ENCODE measurements at regions of chr4 and their contacts with region 1.

Region 1: GRCh38 chr4:173990126-173990868 is 293.2 kb downstream of the FBXO8 start:
- DNase-seq: peak in 1 of 2 donors; percentile 11
- ATAC-seq: peak; percentile 56 to 92 (median 76)
- H3K4me3 ChIP-seq: peak overlapping the region in 8 of 10 donors; percentile 3 to 27 (median 12)
- H3K27ac ChIP-seq: peak overlapping the region; percentile 4 to 73 (median 54)
- H3K4me1 ChIP-seq: peaks cover 0 to 20% (median 3%) of the 10 kb centered on the region in 9 donors
- H3K27me3 ChIP-seq: no peaks in the 10 kb centered on the region
- CTCF ChIP-seq: peak in 8 of 9 donors; percentile 32 to 69 (median 56)

Region 2: GRCh38 chr4:173436149-173436579 is 554.1 kb before region 1 on chr4:
- intact Hi-C with region 1: loop called in 1 of 10 experiments (anchors 10 kb)
- DNase-seq: no peak
- ATAC-seq: peak in 2 of 8 donors; percentile 9 to 29
- H3K4me3 ChIP-seq: no peak overlapping the region
- H3K27ac ChIP-seq: peak overlapping the region in 1 of 10 donors; percentile 14
- H3K4me1 ChIP-seq: peaks cover 0 to 12% (median 0%) of the 10 kb centered on the region in 9 donors
- H3K27me3 ChIP-seq: no peaks in the 10 kb centered on the region
- CTCF ChIP-seq: no peak

Region 3: GRCh38 chr4:173766171-173766600 is 224.1 kb before region 1 on chr4:
- intact Hi-C with region 1: loop called in 1 of 10 experiments (anchors 10 kb)
- DNase-seq: no peak
- ATAC-seq: peak in 4 of 8 donors; percentile 14 to 36 (median 28)
- H3K4me3 ChIP-seq: no peak overlapping the region
- H3K27ac ChIP-seq: no peak overlapping the region
- H3K4me1 ChIP-seq: peaks cover 0 to 11% (median 0%) of the 10 kb centered on the region in 9 donors
- H3K27me3 ChIP-seq: no peaks in the 10 kb centered on the region
- CTCF ChIP-seq: no peak

Region 4: GRCh38 chr4:173807347-173807746 is 182.9 kb before region 1 on chr4:
- intact Hi-C with region 1: no loop called
- DNase-seq: peak in 1 of 2 donors; percentile 7
- ATAC-seq: peak in 4 of 8 donors; percentile 43 to 87 (median 80)
- H3K4me3 ChIP-seq: no peak overlapping the region
- H3K27ac ChIP-seq: no peak overlapping the region
- H3K4me1 ChIP-seq: no peaks in the 10 kb centered on the region
- H3K27me3 ChIP-seq: no peaks in the 10 kb centered on the region
- CTCF ChIP-seq: no peak

Region 5: GRCh38 chr4:174135936-174136406 is 145.7 kb after region 1 on chr4:
- intact Hi-C with region 1: no loop called
- DNase-seq: no peak
- ATAC-seq: no peak
- H3K4me3 ChIP-seq: peak overlapping the region in 8 of 10 donors; percentile 8 to 47 (median 43)
- H3K27ac ChIP-seq: peak overlapping the region in 1 of 10 donors; percentile 31
- H3K4me1 ChIP-seq: no peaks in the 10 kb centered on the region
- H3K27me3 ChIP-seq: no peaks in the 10 kb centered on the region
- CTCF ChIP-seq: no peak

Region 6: DNA sequence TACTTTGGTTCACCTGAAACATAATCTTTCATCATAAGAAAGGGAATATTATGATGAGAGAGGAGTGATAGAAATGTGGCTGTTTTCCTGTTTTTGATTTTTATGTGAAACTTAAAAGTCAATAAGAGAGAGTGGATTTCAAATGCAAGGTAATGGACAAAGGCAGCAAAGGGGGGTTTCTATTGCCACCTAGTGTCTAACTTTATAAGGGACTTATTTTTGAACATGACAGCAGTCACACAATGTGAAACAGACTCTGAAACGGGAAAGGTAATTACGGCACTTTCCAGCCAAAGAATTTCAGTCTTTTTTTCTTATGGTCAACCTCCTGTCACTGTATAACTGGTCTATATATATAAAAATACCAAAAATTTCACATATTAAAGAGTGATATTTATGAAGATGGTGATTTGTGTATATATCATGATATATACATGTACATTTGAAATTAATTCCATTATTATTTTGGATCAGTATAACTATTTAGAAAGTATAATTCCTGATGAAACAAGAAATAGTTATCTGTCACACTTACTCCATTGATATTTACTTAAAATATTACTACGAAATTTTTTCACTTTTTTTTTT is 166.0 kb after region 1 on chr4:
- intact Hi-C with region 1: loop called in 2 of 10 experiments (anchors 5 to 10 kb)
- DNase-seq: peak in 1 of 2 donors; percentile 12
- ATAC-seq: peak; percentile 73 to 85 (median 82)
- H3K4me3 ChIP-seq: peak overlapping the region in 2 of 10 donors; percentile 14
- H3K27ac ChIP-seq: peak overlapping the region in 2 of 10 donors; percentile 28 to 37
- H3K4me1 ChIP-seq: peaks cover 0 to 18% (median 7%) of the 10 kb centered on the region in 9 donors
- H3K27me3 ChIP-seq: no peaks in the 10 kb centered on the region
- CTCF ChIP-seq: peak; percentile 37 to 77 (median 67)

Region 7: DNA sequence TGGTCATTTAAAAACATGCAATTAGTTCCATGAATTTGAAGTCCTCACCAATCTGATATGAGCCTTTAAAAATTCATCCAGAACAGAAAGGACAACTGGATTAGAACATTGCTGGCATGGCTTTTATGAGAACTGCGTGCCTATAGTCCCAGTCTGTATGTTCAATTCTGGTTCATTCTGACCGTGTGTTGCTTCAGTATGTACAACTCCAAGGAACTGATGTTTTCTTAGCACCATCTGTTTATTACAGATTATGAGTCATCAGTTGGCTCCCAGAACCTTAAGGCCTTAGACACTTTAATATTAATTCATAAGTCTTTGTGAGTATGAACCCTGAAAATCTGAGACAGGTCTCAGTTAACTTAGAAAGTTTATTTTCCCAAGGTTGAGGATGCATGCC is 408.4 kb after region 1 on chr4:
- intact Hi-C with region 1: no loop called
- DNase-seq: no peak
- ATAC-seq: peak in 2 of 8 donors; percentile 63 to 67
- H3K4me3 ChIP-seq: no peak overlapping the region
- H3K27ac ChIP-seq: no peak overlapping the region
- H3K4me1 ChIP-seq: no peaks in the 10 kb centered on the region
- H3K27me3 ChIP-seq: no peaks in the 10 kb centered on the region
- CTCF ChIP-seq: no peak

Measured in heart right ventricle (tissue), 16 donors.